Right cardiac atrium (tissue), 5 donors: ENCODE measurements at regions of chr3 and their contacts with region 1.

Region 1: GRCh38 chr3:58324391-58325390 is 8.0 kb upstream of the PXK start:
- DNase-seq: no peak
- ATAC-seq: peak in 1 of 2 donors; percentile 17
- H3K4me3 ChIP-seq: no peak overlapping the region
- H3K27ac ChIP-seq: peak overlapping the region; percentile 42
- H3K4me1 ChIP-seq: no peaks in the 10 kb centered on the region
- H3K27me3 ChIP-seq: no peaks in the 10 kb centered on the region

Region 2: DNA sequence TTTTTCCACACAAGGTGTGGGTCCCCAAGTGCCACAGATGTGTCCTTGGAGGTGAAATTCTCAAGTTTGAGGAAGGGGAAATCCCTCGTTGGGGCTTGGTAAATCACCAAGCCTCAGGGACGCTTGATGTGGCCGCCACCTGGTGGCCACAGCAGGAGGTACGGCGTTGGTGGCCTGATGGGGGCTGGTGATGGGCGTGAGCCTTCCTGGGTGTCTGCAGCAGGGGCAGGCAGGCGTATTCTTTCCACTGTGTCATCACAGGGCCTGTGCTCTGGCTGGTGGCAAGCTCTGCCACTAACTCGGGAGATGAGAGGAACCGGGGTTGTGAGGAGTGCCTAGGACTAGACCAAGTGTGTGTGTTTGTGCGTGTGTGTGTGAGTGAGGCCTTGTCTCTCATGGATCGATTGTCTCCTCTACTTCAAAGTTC is 208.1 kb after region 1 on chr3:
- intact Hi-C with region 1: loop called in 3 of 4 experiments (anchors 5 to 10 kb)
- DNase-seq: peak; percentile 71 to 91 (median 88)
- ATAC-seq: peak; percentile 41 to 63
- H3K4me3 ChIP-seq: no peak overlapping the region
- H3K27ac ChIP-seq: no peak overlapping the region
- H3K4me1 ChIP-seq: peaks cover 13% of the 10 kb centered on the region
- H3K27me3 ChIP-seq: no peaks in the 10 kb centered on the region